ENCODE measurements at regions of chr3 and their contacts with region 1.

Region 1: GRCh38 chr3:179562591-179563270 is at the start of gene ACTL6A:
- DNase-seq: peak; percentile 100
- ATAC-seq: peak; percentile 99
- total RNA-seq, gene ACTL6A: 19.1 TPM

Region 2: GRCh38 chr3:179015551-179016020 is 547.1 kb before region 1 on chr3:
- intact Hi-C with region 1: loop called (anchors 10 kb)
- DNase-seq: no peak
- ATAC-seq: no peak

Region 3: GRCh38 chr3:179147873-179148615 is 414.7 kb before region 1 on chr3 and contains the start of gene PIK3CA:
- intact Hi-C with region 1: loop called (anchors 2 kb)
- DNase-seq: peak; percentile 95
- ATAC-seq: peak; percentile 98
- total RNA-seq, gene PIK3CA: 21.1 TPM

Region 4: GRCh38 chr3:179421500-179421899 is 141.2 kb before region 1 on chr3:
- intact Hi-C with region 1: loop called (anchors 1 kb)
- DNase-seq: no peak
- ATAC-seq: peak; percentile 78

Region 5: DNA sequence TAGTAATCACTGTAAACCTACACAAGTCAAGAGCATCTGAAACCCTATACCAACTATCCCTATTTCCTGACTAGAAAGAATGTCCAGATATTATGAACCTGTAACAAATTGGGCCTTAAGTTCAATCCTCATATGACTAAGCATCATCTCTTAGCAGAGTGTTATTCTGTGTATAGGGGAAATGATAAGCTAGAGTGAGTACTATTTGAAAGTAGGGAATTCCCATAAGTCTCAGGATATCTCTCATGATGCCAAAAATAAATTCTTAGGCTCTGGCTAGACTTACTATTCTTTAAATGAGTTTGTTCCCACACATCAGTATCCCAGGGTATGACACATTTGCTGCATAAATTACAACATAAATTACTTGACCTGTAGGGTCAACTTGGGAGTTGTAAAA is 26.4 kb after region 1 on chr3:
- intact Hi-C with region 1: no loop called
- DNase-seq: no peak
- ATAC-seq: no peak

Region 6: DNA sequence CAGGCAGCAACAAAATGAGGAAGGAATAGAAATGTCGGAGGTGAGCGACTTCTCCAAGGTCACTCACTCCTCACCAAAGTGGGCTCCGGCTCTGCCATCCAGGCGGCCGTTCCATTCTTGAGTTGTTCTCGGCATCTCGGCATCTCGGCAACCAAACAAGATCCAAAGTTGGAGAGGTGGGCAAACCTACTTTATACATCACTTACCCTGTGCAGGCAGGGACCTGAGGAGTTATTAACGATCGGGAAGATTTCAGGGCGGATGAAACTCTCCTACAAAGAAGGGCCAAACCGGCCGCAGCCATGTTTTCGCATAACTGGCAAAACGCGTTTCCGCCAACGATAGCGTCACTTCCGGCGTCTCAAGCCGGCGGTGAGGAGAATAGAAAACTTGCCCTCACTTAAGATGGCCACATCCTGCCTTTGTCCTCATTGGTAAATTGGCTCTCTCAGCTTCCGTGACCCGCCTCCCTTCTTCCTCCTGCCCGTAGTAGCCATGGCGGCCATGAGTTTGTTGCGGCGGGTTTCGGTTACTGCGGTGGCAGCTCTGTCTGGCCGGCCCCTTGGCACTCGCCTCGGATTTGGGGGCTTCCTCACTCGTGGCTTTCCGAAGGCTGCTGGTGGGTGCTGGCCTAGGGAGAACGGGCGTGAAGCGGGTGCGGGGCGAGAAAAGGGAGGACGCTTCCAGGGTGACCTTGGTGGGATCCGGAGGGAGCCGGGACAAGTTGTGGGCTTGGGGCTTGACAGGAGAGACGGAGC is 41.8 kb after region 1 on chr3 and contains the starts of genes MRPL47 and NDUFB5:
- intact Hi-C with region 1: loop called (anchors 5 kb)
- DNase-seq: peak; percentile 98
- ATAC-seq: peak; percentile 100
- total RNA-seq, gene MRPL47: 44.4 TPM
- total RNA-seq, gene NDUFB5: 365 TPM

Measured in Right ventricle myocardium inferior (tissue), 1 donor.